HEK293 (cell line): ENCODE measurements at regions of chr6 and their contacts with region 1.

Region 1: GRCh38 chr6:10722820-10723566 is at the start of gene TMEM14C:
- H3K4me3 ChIP-seq: peak within 1 kb of the TSS; percentile 64
- H3K27ac ChIP-seq: peak within 1 kb of the TSS; percentile 82
- H3K4me1 ChIP-seq: no peaks in the 10 kb centered on the region
- CTCF ChIP-seq: no peak

Region 2: DNA sequence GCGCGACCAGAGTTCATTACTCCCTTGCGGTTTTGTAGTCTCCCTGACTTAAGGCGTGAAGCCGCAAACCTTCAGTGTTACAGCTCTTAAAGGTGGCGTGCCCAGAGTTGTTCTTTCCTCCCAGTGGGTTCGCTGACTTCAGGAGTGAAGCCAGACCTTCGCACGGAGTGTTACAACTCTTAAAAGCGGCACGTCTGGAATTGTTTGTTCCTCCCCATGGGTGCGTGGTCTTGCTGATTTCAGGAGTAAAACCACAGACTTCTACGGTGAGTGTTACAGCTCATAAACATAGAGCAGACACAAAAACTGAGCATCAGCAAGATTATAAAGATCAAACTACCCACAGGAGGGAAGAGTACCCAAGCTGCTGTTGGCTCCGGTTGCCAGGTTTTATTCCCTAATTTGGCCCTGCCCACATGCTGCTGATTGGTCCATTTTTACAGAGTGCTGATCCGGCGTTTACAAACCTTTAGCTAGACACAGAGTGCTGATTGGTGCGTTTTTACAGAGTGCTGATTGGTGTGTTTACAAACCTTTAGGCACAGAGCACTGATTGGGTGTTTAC is 10.2 kb after region 1 on chr6:
- CTCF ChIA-PET with region 1: interaction called, 3 read pairs
- POLR2A ChIA-PET with region 1: interaction called, 53 read pairs
- H3K4me3 ChIP-seq: no peak overlapping the region
- H3K27ac ChIP-seq: no peak overlapping the region
- H3K4me1 ChIP-seq: no peaks in the 10 kb centered on the region
- CTCF ChIP-seq: no peak

Region 3: GRCh38 chr6:10747251-10747972 is 24.4 kb after region 1 on chr6 and contains the start of gene TMEM14B:
- CTCF ChIA-PET with region 1: interaction called, 6 read pairs
- POLR2A ChIA-PET with region 1: interaction called, 82 read pairs
- H3K4me3 ChIP-seq: peak within 1 kb of the TSS; percentile 83
- H3K27ac ChIP-seq: peak within 1 kb of the TSS; percentile 67
- H3K4me1 ChIP-seq: peaks cover 7% of the 10 kb centered on the region; the same call in 1 of the 2 replicates
- CTCF ChIP-seq: no peak

Region 4: GRCh38 chr6:10759312-10759839 is 36.4 kb after region 1 on chr6:
- CTCF ChIA-PET with region 1: interaction called, 4 read pairs
- POLR2A ChIA-PET with region 1: interaction called, 10 read pairs
- H3K4me3 ChIP-seq: no peak overlapping the region
- H3K27ac ChIP-seq: no peak overlapping the region
- H3K4me1 ChIP-seq: no peaks in the 10 kb centered on the region
- CTCF ChIP-seq: no peak

Region 5: DNA sequence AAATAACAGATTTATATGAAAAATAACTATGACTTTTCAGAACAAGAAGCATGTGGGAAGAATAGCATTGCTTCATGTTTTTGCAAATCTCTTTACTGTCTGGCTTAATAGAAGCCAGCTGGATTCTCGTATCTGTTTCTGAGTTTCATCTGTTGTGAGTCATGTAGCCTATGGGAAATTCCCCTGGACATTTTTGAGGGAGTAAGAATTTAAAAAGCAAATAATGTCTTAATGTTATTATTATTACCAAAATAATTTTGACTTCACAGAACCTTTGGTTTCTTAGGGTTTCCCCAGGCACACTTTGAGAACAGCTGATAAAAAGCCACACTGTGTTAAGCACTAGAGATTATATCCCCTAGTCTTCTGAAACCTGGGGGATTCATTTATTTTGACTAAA is 239.7 kb after region 1 on chr6:
- CTCF ChIA-PET with region 1: no interaction called
- POLR2A ChIA-PET with region 1: no interaction called
- H3K4me3 ChIP-seq: no peak overlapping the region
- H3K27ac ChIP-seq: no peak overlapping the region
- H3K4me1 ChIP-seq: no peaks in the 10 kb centered on the region
- CTCF ChIP-seq: no peak